ENCODE measurements at regions of chr11 and their contacts with region 1.

Region 1: DNA sequence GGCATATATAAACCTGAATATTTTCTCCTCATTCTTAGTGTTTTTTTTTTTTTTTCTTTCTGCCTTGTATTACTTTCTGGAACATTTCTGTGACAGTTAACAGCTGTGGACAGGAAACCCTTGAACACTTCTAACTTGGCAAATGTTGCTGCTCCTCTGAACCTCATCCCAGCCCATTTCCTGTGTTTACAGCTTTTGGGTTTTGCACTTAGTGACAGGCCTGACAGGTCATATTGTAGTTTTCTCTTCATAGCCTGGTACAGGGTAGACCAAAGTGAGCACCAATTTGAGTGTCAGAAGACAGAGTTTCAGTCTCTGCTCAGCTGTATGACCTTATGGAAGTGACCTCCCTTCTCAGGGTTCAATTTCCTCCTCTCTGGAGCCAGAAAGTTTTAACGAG is 91.6 kb downstream of the STIM1 start:
- DNase-seq: peak; percentile 44 to 84
- ATAC-seq: peak; percentile 78 to 92 (median 91)
- H3K4me3 ChIP-seq: no peak overlapping the region
- H3K4me3 Mint-ChIP-seq: peak overlapping the region; percentile 84
- H3K27ac ChIP-seq: peak overlapping the region; percentile 82
- H3K27ac Mint-ChIP-seq: peak overlapping the region; percentile 87 to 91
- H3K4me1 ChIP-seq: peaks cover 80% of the 10 kb centered on the region
- H3K4me1 Mint-ChIP-seq: peaks cover 96% of the 10 kb centered on the region in 2 donors
- H3K27me3 ChIP-seq: no peaks in the 10 kb centered on the region
- H3K27me3 Mint-ChIP-seq: no peaks in the 10 kb centered on the region
- CTCF ChIP-seq: no peak

Region 2: GRCh38 chr11:3834664-3835461 is 112.2 kb before region 1 on chr11:
- intact Hi-C with region 1: loop called (anchors 5 kb)
- DNase-seq: peak in 1 of 2 donors; percentile 33
- ATAC-seq: peak in 1 of 3 donors; percentile 37
- H3K4me3 ChIP-seq: no peak overlapping the region
- H3K4me3 Mint-ChIP-seq: peak overlapping the region; percentile 81
- H3K27ac ChIP-seq: peak overlapping the region; percentile 84
- H3K27ac Mint-ChIP-seq: peak overlapping the region; percentile 90 to 95
- H3K4me1 ChIP-seq: peaks cover 97% of the 10 kb centered on the region
- H3K4me1 Mint-ChIP-seq: peaks cover 86 to 97% of the 10 kb centered on the region in 2 donors
- H3K27me3 ChIP-seq: no peaks in the 10 kb centered on the region
- H3K27me3 Mint-ChIP-seq: no peaks in the 10 kb centered on the region
- CTCF ChIP-seq: no peak

Region 3: GRCh38 chr11:3920148-3920852 is 26.8 kb before region 1 on chr11:
- intact Hi-C with region 1: loop called (anchors 1 kb)
- DNase-seq: peak; percentile 57 to 76
- ATAC-seq: peak; percentile 78 to 79 (median 78)
- H3K4me3 ChIP-seq: no peak overlapping the region
- H3K4me3 Mint-ChIP-seq: peak overlapping the region; percentile 36
- H3K27ac ChIP-seq: peak overlapping the region; percentile 65
- H3K27ac Mint-ChIP-seq: peak overlapping the region; percentile 61 to 81
- H3K4me1 ChIP-seq: peaks cover 47% of the 10 kb centered on the region
- H3K4me1 Mint-ChIP-seq: peaks cover 57% of the 10 kb centered on the region in 2 donors
- H3K27me3 ChIP-seq: no peaks in the 10 kb centered on the region
- H3K27me3 Mint-ChIP-seq: no peaks in the 10 kb centered on the region
- CTCF ChIP-seq: no peak

Region 4: DNA sequence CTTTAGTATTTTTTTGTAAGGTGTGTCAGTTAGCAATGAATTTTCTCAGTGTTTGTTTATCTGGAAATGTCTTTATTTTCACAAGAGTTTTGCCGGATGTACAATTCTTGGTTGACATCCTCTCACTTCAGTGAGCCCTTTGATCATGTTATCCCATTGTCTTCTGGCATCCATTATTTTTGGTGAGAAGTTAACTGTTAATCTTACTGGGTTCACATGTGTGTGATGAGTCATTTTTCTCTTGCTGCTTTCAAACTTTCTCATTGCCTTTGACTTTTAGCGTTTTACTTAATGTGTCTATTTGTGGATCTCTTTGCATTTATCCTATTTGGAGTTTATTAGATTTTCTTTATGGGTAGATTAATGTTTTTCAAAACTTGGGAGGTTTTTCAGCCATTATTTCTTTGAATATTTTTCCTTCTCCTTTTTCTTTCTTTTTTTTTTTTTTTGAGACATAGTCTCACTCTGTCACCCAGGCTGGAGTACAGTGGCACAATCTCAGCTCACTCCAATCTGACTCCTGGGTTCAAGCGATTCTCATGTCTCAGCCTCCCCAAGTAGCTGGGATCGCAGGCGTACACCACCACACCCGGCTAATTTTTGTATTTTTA is 47.1 kb after region 1 on chr11:
- intact Hi-C with region 1: loop called (anchors 2 kb)
- DNase-seq: peak in 1 of 2 donors; percentile 23
- ATAC-seq: peak in 1 of 3 donors; percentile 49
- H3K4me3 ChIP-seq: no peak overlapping the region
- H3K4me3 Mint-ChIP-seq: no peak overlapping the region
- H3K27ac ChIP-seq: no peak overlapping the region
- H3K27ac Mint-ChIP-seq: no peak overlapping the region
- H3K4me1 ChIP-seq: peaks cover 15% of the 10 kb centered on the region
- H3K4me1 Mint-ChIP-seq: peaks cover 76 to 78% of the 10 kb centered on the region in 2 donors
- H3K27me3 ChIP-seq: no peaks in the 10 kb centered on the region
- H3K27me3 Mint-ChIP-seq: no peaks in the 10 kb centered on the region
- CTCF ChIP-seq: no peak

Region 5: GRCh38 chr11:4072668-4073285 is 125.7 kb after region 1 on chr11:
- intact Hi-C with region 1: loop called (anchors 5 kb)
- DNase-seq: peak in 1 of 2 donors; percentile 88
- ATAC-seq: peak; percentile 85 to 97 (median 91)
- H3K4me3 ChIP-seq: no peak overlapping the region
- H3K4me3 Mint-ChIP-seq: no peak overlapping the region
- H3K27ac ChIP-seq: peak overlapping the region; percentile 19
- H3K27ac Mint-ChIP-seq: peak overlapping the region; percentile 47 to 64
- H3K4me1 ChIP-seq: peaks cover 6% of the 10 kb centered on the region
- H3K4me1 Mint-ChIP-seq: peaks cover 42 to 47% of the 10 kb centered on the region in 2 donors
- H3K27me3 ChIP-seq: no peaks in the 10 kb centered on the region
- H3K27me3 Mint-ChIP-seq: no peaks in the 10 kb centered on the region
- CTCF ChIP-seq: peak; percentile 79

Region 6: DNA sequence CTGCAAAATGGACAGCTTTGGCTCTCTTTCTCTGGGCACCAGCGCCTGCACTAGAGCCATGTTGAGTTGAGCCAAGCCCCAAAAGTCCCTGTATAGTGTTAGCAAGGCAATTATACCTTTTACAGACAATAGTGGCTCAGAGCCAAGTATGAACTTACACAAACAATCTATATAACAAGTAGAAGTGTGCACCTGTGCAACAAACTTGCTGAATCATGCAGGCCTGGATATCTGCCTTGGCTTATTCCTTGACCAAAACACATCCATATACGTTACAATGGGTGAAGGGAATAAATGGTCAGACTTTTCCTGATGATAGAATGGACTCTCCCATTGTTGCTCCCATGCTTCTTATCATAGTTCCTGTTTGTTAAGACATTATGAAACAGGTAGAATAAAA is 630.7 kb after region 1 on chr11:
- intact Hi-C with region 1: no loop called
- DNase-seq: no peak
- ATAC-seq: no peak
- H3K4me3 ChIP-seq: no peak overlapping the region
- H3K4me3 Mint-ChIP-seq: no peak overlapping the region
- H3K27ac ChIP-seq: no peak overlapping the region
- H3K27ac Mint-ChIP-seq: no peak overlapping the region
- H3K4me1 ChIP-seq: no peaks in the 10 kb centered on the region
- H3K4me1 Mint-ChIP-seq: no peaks in the 10 kb centered on the region
- H3K27me3 ChIP-seq: no peaks in the 10 kb centered on the region
- H3K27me3 Mint-ChIP-seq: peaks cover 39 to 57% of the 10 kb centered on the region in 2 donors
- CTCF ChIP-seq: no peak